Activated CD4-positive, alpha-beta T cell treated with anti-CD3 and anti-CD28 coated beads for 36 hours (primary cell): ENCODE measurements at regions of chr11 and their contacts with region 1.

Region 1: GRCh38 chr11:73661035-73661628 is 14.8 kb downstream of the PLEKHB1 start:
- DNase-seq: peak; percentile 92
- ATAC-seq: peak; percentile 92
- H3K4me3 Mint-ChIP-seq: peak overlapping the region; percentile 24
- H3K27ac Mint-ChIP-seq: no peak overlapping the region
- H3K4me1 Mint-ChIP-seq: peaks cover 10% of the 10 kb centered on the region
- H3K27me3 Mint-ChIP-seq: no peaks in the 10 kb centered on the region

Region 2: GRCh38 chr11:73307323-73308002 is 353.7 kb before region 1 on chr11:
- CTCF ChIA-PET with region 1: interaction called, 4 read pairs
- POLR2A ChIA-PET with region 1: no interaction called
- intact Hi-C with region 1: loop called in 1 of 2 experiments (anchors 1 kb)
- DNase-seq: peak; percentile 96
- ATAC-seq: peak; percentile 82
- H3K4me3 Mint-ChIP-seq: peak overlapping the region; percentile 80
- H3K27ac Mint-ChIP-seq: no peak overlapping the region
- H3K4me1 Mint-ChIP-seq: peaks cover 5% of the 10 kb centered on the region
- H3K27me3 Mint-ChIP-seq: peaks cover 20% of the 10 kb centered on the region

Region 3: DNA sequence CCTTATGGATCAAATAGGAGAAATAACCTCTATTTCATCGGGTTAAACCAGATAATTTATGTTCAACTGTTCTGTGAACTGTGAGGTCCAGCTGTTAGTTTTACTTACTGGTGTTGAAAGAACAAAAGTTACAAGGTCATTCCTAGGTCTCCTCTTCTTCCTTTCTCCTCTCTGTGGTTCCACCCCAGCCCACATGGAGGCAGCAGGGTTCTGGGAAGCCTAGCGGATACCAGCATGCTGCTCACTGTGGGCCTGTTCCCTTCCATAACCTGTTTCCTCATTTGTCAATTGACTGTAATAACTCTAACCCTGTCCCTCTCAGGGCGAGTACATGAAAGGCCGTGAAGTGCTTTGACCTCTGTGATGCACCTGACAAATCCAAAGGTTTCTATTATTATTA is 257.1 kb before region 1 on chr11:
- CTCF ChIA-PET with region 1: interaction called, 5 read pairs
- POLR2A ChIA-PET with region 1: no interaction called
- intact Hi-C with region 1: loop called (anchors 1 to 10 kb)
- DNase-seq: peak; percentile 7
- ATAC-seq: no peak
- H3K4me3 Mint-ChIP-seq: no peak overlapping the region
- H3K27ac Mint-ChIP-seq: no peak overlapping the region
- H3K4me1 Mint-ChIP-seq: peaks cover 3% of the 10 kb centered on the region
- H3K27me3 Mint-ChIP-seq: no peaks in the 10 kb centered on the region

Region 4: DNA sequence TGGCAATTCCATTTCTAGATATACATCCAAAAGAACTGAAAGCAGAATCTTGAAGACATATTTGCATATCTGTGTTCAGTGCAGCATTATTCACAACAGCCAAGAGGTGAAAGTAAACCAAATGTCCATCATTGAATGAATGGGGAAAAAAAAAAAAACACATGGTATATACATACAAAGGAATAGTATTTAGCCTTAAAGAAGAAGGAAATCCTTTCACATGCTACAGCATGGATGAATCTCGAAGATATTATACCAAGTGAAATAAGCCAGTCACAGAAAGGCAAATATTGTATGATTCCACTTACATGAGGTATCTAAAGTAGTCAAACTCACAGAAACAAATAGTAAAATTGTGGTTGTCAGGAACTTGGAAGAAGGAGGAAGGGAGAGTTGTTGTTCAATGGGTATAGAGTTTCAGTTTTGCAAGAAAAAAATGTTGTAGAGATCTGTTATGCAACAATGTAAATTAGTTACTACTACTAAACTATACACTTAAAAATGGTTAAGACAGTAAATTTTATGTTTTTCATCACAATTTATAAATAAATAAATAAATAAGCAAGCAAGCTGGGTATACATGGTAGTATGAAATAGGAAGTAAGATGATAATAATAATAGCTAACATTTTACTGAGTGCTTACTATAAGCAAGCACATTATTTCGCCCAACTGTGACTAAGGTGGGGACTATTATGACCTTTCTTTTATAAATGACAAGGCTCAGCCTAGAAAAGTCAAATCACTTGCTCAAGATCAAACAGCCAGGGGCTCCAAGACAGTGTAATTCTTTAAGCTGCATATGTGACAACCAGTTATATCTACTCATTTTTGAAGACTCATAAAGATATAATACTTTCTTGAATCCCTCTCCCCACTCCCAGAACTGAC is 113.2 kb before region 1 on chr11:
- CTCF ChIA-PET with region 1: no interaction called
- POLR2A ChIA-PET with region 1: no interaction called
- intact Hi-C with region 1: no loop called
- DNase-seq: no peak
- ATAC-seq: no peak
- H3K4me3 Mint-ChIP-seq: no peak overlapping the region
- H3K27ac Mint-ChIP-seq: no peak overlapping the region
- H3K4me1 Mint-ChIP-seq: peaks cover 20% of the 10 kb centered on the region
- H3K27me3 Mint-ChIP-seq: no peaks in the 10 kb centered on the region

Region 5: GRCh38 chr11:73640592-73640991 is 20.5 kb before region 1 on chr11:
- CTCF ChIA-PET with region 1: interaction called, 43 read pairs
- POLR2A ChIA-PET with region 1: no interaction called
- intact Hi-C with region 1: no loop called
- DNase-seq: no peak
- ATAC-seq: peak; percentile 30
- H3K4me3 Mint-ChIP-seq: no peak overlapping the region
- H3K27ac Mint-ChIP-seq: peak overlapping the region; percentile 27
- H3K4me1 Mint-ChIP-seq: peaks cover 10% of the 10 kb centered on the region
- H3K27me3 Mint-ChIP-seq: no peaks in the 10 kb centered on the region

Region 6: DNA sequence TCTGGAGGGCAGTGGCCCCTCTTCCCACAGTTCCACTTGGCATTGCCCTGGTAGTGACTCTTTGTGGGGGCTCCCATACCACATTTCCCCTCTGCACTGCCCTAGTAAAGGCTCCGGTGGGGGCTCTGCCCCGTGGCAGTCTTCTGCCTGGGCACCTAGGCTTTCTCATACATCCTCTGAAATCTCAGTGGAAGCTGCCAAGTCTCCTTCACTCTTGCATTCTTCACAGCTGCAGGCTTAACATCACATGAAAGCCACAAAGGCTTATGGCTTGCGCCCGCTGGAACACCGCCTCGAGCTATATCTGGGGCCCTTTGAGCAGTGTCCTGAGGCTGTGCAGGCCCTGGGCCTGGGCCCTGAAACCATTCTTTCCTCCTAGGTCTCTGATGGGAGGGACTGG is 10.6 kb after region 1 on chr11:
- CTCF ChIA-PET with region 1: interaction called, 23 read pairs
- POLR2A ChIA-PET with region 1: no interaction called
- intact Hi-C with region 1: no loop called
- DNase-seq: no peak
- ATAC-seq: no peak
- H3K4me3 Mint-ChIP-seq: no peak overlapping the region
- H3K27ac Mint-ChIP-seq: no peak overlapping the region
- H3K4me1 Mint-ChIP-seq: no peaks in the 10 kb centered on the region
- H3K27me3 Mint-ChIP-seq: no peaks in the 10 kb centered on the region

Region 7: GRCh38 chr11:73705053-73705452 is 43.9 kb after region 1 on chr11:
- CTCF ChIA-PET with region 1: no interaction called
- POLR2A ChIA-PET with region 1: no interaction called
- intact Hi-C with region 1: no loop called
- DNase-seq: no peak
- ATAC-seq: no peak
- H3K4me3 Mint-ChIP-seq: no peak overlapping the region
- H3K27ac Mint-ChIP-seq: no peak overlapping the region
- H3K4me1 Mint-ChIP-seq: no peaks in the 10 kb centered on the region
- H3K27me3 Mint-ChIP-seq: no peaks in the 10 kb centered on the region